Naive thymus-derived CD4-positive, alpha-beta T cell (primary cell): ENCODE measurements at regions of chr19 and their contacts with region 1.

Region 1: DNA sequence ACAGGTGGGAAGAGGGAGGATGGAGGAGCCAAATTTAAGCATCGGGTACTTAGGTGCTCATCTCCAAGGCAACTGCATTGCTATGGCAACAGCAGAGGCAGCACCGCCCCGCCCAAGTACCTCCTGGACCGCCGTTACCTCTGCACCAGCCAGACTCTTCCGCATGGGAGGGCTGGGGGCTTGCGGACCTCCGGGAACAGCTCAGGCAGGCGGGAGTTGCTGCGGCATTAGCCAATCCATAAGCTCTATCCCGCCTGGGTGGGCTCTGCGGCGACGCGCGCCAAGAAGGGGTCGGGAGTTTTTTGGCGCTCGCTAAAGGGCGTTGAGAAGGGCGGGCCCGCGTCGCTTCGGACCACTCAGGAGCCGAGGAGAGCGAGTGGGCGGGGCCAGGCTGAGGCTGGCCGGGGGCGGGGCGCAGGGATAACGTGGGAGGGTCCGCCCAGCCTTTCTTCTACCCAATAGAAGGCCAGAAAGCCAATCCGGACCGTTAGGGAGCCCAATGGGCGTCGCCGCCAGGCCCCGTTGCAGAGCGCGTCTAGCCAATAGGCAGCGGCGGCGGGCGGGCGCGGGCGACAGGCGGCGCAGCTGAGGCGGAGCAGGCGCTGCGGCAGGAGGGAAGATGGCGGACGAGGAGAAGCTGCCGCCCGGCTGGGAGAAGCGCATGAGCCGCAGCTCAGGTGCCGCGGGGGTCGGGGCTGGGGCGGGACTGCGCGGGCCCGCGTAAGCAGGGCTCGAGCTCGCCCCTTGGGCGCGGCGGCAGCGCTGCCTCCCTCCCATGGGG is at the start of gene PIN1:
- DNase-seq: peak; percentile 98 to 100 (median 99)
- ATAC-seq: peak; percentile 98
- H3K4me3 ChIP-seq: peak within 1 kb of the TSS; percentile 92
- H3K4me3 Mint-ChIP-seq: peak within 1 kb of the TSS; percentile 83 to 97 (median 95)
- H3K27ac ChIP-seq: peak within 1 kb of the TSS; percentile 71
- H3K27ac Mint-ChIP-seq: peak within 1 kb of the TSS; percentile 82 to 99 (median 94)
- H3K4me1 ChIP-seq: peaks cover 10 to 11% of the 10 kb centered on the region in 2 donors
- H3K4me1 Mint-ChIP-seq: peaks cover 16 to 32% (median 20%) of the 10 kb centered on the region in 7 donors
- H3K27me3 ChIP-seq: no peaks in the 10 kb centered on the region
- H3K27me3 Mint-ChIP-seq: no peaks in the 10 kb centered on the region
- total RNA-seq, gene PIN1: 41.4 to 93.2 (median 61.1) TPM

Region 2: GRCh38 chr19:9785367-9786331 is 49.3 kb before region 1 on chr19:
- CTCF ChIA-PET with region 1: no interaction called
- POLR2A ChIA-PET with region 1: no interaction called
- intact Hi-C with region 1: loop called in 1 of 2 experiments (anchors 2 kb)
- DNase-seq: peak; percentile 81 to 97 (median 92)
- ATAC-seq: peak; percentile 92
- H3K4me3 ChIP-seq: peak overlapping the region; percentile 86
- H3K4me3 Mint-ChIP-seq: peak overlapping the region; percentile 73 to 95 (median 88)
- H3K27ac ChIP-seq: peak overlapping the region; percentile 80
- H3K27ac Mint-ChIP-seq: peak overlapping the region; percentile 83 to 99 (median 94)
- H3K4me1 ChIP-seq: peaks cover 5 to 9% of the 10 kb centered on the region in 2 donors
- H3K4me1 Mint-ChIP-seq: peaks cover 10 to 37% (median 27%) of the 10 kb centered on the region in 7 donors
- H3K27me3 ChIP-seq: no peaks in the 10 kb centered on the region
- H3K27me3 Mint-ChIP-seq: no peaks in the 10 kb centered on the region

Region 3: GRCh38 chr19:9857920-9858746 is 23.2 kb after region 1 on chr19:
- CTCF ChIA-PET with region 1: interaction called, 3 read pairs
- POLR2A ChIA-PET with region 1: interaction called, 8 read pairs
- intact Hi-C with region 1: loop called (anchors 1 to 2 kb)
- DNase-seq: peak in 7 of 9 donors; percentile 19 to 64 (median 57)
- ATAC-seq: peak; percentile 82
- H3K4me3 ChIP-seq: peak overlapping the region; percentile 70
- H3K4me3 Mint-ChIP-seq: peak overlapping the region; percentile 91 to 100 (median 96)
- H3K27ac ChIP-seq: peak overlapping the region; percentile 67
- H3K27ac Mint-ChIP-seq: peak overlapping the region; percentile 94 to 99 (median 98)
- H3K4me1 ChIP-seq: peaks cover 56 to 72% of the 10 kb centered on the region in 2 donors
- H3K4me1 Mint-ChIP-seq: peaks cover 48 to 96% (median 85%) of the 10 kb centered on the region in 7 donors
- H3K27me3 ChIP-seq: no peaks in the 10 kb centered on the region
- H3K27me3 Mint-ChIP-seq: no peaks in the 10 kb centered on the region

Region 4: GRCh38 chr19:9914315-9915207 is 79.6 kb after region 1 on chr19:
- CTCF ChIA-PET with region 1: interaction called, 5 read pairs
- POLR2A ChIA-PET with region 1: no interaction called
- intact Hi-C with region 1: loop called (anchors 1 kb)
- DNase-seq: peak; percentile 59 to 83 (median 72)
- ATAC-seq: peak; percentile 95
- H3K4me3 ChIP-seq: peak overlapping the region; percentile 64
- H3K4me3 Mint-ChIP-seq: peak overlapping the region; percentile 66 to 86 (median 72)
- H3K27ac ChIP-seq: no peak overlapping the region
- H3K27ac Mint-ChIP-seq: no peak overlapping the region
- H3K4me1 ChIP-seq: peaks cover 3 to 5% of the 10 kb centered on the region in 2 donors
- H3K4me1 Mint-ChIP-seq: peaks cover 6 to 12% (median 9%) of the 10 kb centered on the region in 7 donors
- H3K27me3 ChIP-seq: peaks cover 0 to 13% of the 10 kb centered on the region in 2 donors
- H3K27me3 Mint-ChIP-seq: peaks cover 22 to 33% (median 27%) of the 10 kb centered on the region in 5 donors

Region 5: DNA sequence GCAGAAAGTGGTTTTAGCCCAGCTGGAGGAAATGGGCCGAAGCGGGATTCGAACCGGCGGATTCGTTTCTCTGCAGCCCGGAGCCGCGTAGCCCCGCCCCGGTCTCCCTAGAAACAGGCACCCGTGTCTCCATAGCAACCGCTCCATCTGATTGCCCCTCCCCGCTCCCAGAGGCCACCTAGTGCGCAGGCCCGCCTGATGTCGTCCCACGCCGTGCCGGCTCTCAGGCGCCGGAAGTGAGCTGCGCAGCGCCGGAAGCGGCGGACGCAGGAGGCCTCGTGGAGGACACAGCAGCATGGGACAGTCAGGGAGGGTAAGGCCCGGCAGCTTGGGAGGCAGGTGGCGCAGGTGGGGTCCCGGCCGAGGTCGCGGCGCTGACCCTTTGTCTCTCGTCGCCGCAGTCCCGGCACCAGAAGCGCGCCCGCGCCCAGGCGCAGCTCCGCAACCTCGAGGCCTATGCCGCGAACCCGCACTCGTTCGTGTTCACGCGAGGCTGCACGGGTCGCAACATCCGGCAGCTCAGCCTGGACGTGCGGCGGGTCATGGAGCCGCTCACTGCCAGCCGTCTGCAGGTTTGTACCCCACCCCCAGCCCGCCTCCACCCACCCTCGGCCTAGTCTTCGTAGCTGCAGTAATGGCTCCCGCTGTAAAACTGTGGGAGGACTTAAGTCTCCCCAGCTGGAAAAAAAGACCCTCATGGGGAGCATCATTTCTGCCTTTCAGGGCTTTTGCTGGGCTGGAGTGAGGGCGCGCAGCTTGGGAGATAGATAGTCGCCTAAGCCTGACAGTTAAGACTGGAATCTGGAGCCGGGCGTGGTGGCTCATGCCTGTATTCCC is 271.4 kb after region 1 on chr19 and contains the start of gene PPAN:
- CTCF ChIA-PET with region 1: no interaction called
- POLR2A ChIA-PET with region 1: no interaction called
- intact Hi-C with region 1: loop called in 1 of 2 experiments (anchors 2 kb)
- DNase-seq: peak; percentile 88 to 98 (median 97)
- ATAC-seq: peak; percentile 86
- H3K4me3 ChIP-seq: peak within 1 kb of the TSS; percentile 60
- H3K4me3 Mint-ChIP-seq: peak within 1 kb of the TSS; percentile 75 to 91 (median 88)
- H3K27ac ChIP-seq: peak within 1 kb of the TSS; percentile 86
- H3K27ac Mint-ChIP-seq: peak within 1 kb of the TSS; percentile 92 to 98 (median 97)
- H3K4me1 ChIP-seq: peaks cover 53 to 65% of the 10 kb centered on the region in 2 donors
- H3K4me1 Mint-ChIP-seq: peaks cover 32 to 61% (median 56%) of the 10 kb centered on the region in 7 donors
- H3K27me3 ChIP-seq: no peaks in the 10 kb centered on the region
- H3K27me3 Mint-ChIP-seq: no peaks in the 10 kb centered on the region
- total RNA-seq, gene PPAN: 87.6 to 122 (median 109) TPM